ENCODE measurements at regions of chr21 and their contacts with region 1.

Region 1: GRCh38 chr21:44438531-44439207 is 16.6 kb upstream of the LRRC3 start:
- DNase-seq: peak; percentile 71 to 81
- ATAC-seq: peak; percentile 86 to 96 (median 93)
- H3K4me3 ChIP-seq: peak overlapping the region in 4 of 10 donors; percentile 10 to 36 (median 22)
- H3K27ac ChIP-seq: peak overlapping the region in 8 of 10 donors; percentile 62 to 93 (median 80)
- H3K4me1 ChIP-seq: peaks cover 0 to 20% (median 5%) of the 10 kb centered on the region in 9 donors
- H3K27me3 ChIP-seq: peaks cover 0 to 7% (median 0%) of the 10 kb centered on the region in 7 donors
- CTCF ChIP-seq: no peak

Region 2: DNA sequence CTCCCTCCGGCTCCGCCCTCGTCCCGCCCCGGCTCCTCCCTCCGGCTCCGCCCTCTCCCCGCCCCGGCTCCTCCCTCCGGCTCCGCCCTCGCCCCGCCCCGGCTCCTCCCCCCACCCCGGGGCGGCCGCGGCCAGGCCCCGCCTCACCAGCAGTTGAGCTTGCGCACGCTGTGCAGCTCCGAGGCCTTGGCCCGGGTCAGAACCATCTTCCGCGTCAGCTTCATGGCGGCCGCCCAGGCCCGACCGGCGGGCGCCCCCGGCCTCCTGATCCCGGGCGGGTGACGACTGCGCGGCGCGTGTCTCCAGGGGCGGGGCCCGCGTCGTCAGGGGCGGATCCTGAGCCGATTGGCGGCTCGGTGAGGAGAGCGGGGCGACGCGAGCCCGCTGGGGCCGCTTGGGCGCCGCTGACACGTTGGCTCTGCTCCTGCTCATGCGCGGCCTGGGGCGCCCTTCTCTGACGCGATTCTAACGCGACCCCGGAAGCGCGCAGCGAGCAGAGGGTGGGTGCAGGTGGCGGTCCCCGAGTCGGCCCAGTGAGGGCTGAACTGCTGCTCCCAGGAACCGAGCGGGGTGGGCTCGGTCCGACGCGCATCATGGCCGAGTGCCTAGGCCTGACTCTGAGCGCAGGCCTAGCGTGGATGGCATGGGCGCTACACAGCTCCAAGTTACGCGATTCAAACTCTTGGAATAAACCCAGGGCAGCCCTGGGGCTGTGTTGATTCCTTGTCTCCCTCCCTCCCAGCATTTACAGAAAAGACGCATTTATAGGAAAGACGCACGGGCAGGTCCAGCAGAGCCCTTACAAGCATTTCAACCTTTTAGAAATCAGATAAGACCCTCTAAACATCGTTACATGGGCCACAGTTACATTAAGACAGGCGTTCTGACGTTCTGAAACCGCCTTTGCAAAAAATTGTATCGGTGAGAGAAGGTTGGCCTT is 99.4 kb before region 1 on chr21 and contains the start of gene CFAP410:
- intact Hi-C with region 1: loop called in 1 of 10 experiments (anchors 1 kb)
- DNase-seq: peak; percentile 92 to 96
- ATAC-seq: peak; percentile 94 to 95 (median 94)
- H3K4me3 ChIP-seq: peak within 1 kb of the TSS; percentile 53 to 97 (median 86)
- H3K27ac ChIP-seq: peak within 1 kb of the TSS; percentile 91 to 99 (median 97)
- H3K4me1 ChIP-seq: peaks cover 5 to 22% (median 18%) of the 10 kb centered on the region in 9 donors
- H3K27me3 ChIP-seq: no peaks in the 10 kb centered on the region
- CTCF ChIP-seq: no peak
- total RNA-seq, gene CFAP410: 10.9 to 15.8 (median 13.3) TPM

Region 3: DNA sequence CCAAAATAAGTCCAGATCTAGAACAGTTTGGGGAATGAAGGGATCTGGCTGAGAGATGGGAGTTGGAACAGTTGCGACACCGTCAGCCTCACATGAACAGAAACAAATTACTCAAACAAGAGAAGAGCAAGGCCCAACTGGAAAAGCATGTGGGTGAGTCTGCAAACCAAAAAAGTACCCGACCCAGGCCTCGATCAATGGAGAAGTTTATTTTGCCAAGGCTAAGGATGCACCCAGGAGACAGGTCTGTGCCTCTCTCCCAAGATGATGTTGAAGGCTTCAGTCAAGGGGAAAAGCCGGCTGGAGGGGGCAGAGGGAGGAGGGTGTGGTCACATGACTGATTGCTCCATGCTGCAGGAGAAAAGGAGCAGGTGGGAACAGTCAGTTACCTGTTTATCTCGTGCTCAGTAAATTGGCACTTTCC is 59.0 kb after region 1 on chr21:
- intact Hi-C with region 1: loop called in 1 of 10 experiments (anchors 10 kb)
- DNase-seq: no peak
- ATAC-seq: peak in 2 of 8 donors; percentile 23 to 26
- H3K4me3 ChIP-seq: no peak overlapping the region
- H3K27ac ChIP-seq: peak overlapping the region in 1 of 10 donors; percentile 8
- H3K4me1 ChIP-seq: peaks cover 0 to 32% (median 18%) of the 10 kb centered on the region in 9 donors
- H3K27me3 ChIP-seq: peaks cover 0 to 52% (median 6%) of the 10 kb centered on the region in 7 donors
- CTCF ChIP-seq: no peak

Region 4: GRCh38 chr21:45615145-45615711 is 1176.6 kb after region 1 on chr21:
- intact Hi-C with region 1: no loop called
- DNase-seq: no peak
- ATAC-seq: no peak
- H3K4me3 ChIP-seq: peak overlapping the region in 1 of 10 donors; percentile 16
- H3K27ac ChIP-seq: no peak overlapping the region
- H3K4me1 ChIP-seq: peaks cover 0 to 14% (median 0%) of the 10 kb centered on the region in 9 donors
- H3K27me3 ChIP-seq: peaks cover 0 to 84% (median 68%) of the 10 kb centered on the region in 7 donors
- CTCF ChIP-seq: no peak